Mammary epithelial cell (primary cell): ENCODE measurements at regions of chr4 and their contacts with region 1.

Region 1: DNA sequence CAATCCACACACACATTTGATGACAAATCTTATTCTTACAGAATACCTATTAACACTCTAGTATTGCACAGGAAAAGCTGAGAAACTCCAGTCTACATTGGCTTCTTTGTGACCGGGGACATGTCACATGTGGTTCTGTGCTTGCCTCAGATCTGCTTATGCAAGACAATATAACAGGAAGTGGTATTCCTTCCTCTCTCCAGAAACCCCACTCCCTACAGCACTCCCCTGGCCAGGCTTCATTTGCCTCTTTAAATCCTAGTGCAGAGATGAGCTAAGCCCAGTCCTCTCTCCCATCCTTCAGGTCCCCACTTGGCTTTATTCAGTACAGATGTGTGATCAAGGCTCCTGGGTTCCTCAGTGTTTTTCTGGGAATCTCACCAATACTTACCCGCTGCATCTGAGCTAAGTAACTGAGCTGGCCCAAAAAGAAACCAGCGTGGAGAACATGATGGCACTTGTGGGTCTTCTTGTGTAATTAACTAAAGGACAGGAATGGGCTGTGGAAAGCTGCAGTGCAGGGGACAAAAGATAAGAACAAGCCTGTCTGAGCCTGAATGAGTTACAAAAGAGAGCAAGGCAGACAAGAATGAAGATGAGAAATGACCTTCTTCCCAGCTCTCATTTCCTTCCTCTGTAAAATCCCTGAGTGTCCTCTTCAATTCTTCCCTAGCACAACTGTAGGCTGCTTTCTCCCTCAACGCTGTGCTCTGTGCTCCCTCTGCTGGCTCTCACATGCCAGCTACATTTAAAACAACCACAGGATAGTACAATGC is 105.6 kb downstream of the HNRNPD start:
- DNase-seq: peak; percentile 70
- H3K4me3 ChIP-seq: no peak overlapping the region
- H3K27ac ChIP-seq: peak overlapping the region; percentile 32
- H3K4me1 ChIP-seq: peaks cover 11% of the 10 kb centered on the region
- H3K27me3 ChIP-seq: no peaks in the 10 kb centered on the region
- CTCF ChIP-seq: peak; percentile 94 to 99

Region 2: GRCh38 chr4:81844717-81845116 is 423.5 kb before region 1 on chr4:
- CTCF ChIA-PET with region 1: no interaction called
- dilution Hi-C with region 1: no loop called
- in situ Hi-C with region 1: no loop called
- intact Hi-C with region 1: loop called (anchors 1 kb)
- DNase-seq: peak; percentile 76
- H3K4me3 ChIP-seq: no peak overlapping the region
- H3K27ac ChIP-seq: no peak overlapping the region
- H3K4me1 ChIP-seq: no peaks in the 10 kb centered on the region
- H3K27me3 ChIP-seq: no peaks in the 10 kb centered on the region
- CTCF ChIP-seq: peak; percentile 61 to 75

Region 3: DNA sequence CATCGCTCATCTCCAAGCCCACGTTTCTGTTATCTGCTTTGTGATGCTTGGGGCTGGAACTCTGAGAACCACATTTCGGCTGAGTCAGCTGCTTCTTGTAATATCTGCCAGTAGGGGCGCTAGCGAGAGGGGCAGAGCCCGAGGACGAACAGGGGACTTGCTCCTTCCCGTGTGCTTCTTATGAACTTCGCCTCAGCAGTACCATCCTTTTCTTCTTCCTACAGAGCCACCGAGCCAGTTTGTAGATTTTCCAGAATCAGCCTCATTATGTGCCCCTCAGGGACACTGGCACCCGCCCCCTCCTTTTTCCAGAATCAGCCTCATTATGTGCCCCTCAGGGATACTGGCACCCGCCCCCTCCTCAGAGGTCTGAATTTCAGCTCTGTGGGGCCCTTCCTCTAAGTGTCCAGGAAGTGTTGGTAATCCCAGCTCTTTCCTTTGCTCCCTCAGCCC is 354.8 kb before region 1 on chr4:
- CTCF ChIA-PET with region 1: no interaction called
- dilution Hi-C with region 1: no loop called
- in situ Hi-C with region 1: no loop called
- intact Hi-C with region 1: no loop called
- DNase-seq: peak; percentile 46
- H3K4me3 ChIP-seq: no peak overlapping the region
- H3K27ac ChIP-seq: no peak overlapping the region
- H3K4me1 ChIP-seq: no peaks in the 10 kb centered on the region
- H3K27me3 ChIP-seq: no peaks in the 10 kb centered on the region
- CTCF ChIP-seq: peak; percentile 74 to 80

Region 4: GRCh38 chr4:82044142-82044993 is 223.9 kb before region 1 on chr4:
- CTCF ChIA-PET with region 1: no interaction called
- dilution Hi-C with region 1: no loop called
- in situ Hi-C with region 1: no loop called
- intact Hi-C with region 1: loop called (anchors 2 kb)
- DNase-seq: peak; percentile 77
- H3K4me3 ChIP-seq: peak overlapping the region; percentile 62 to 72 (median 65)
- H3K27ac ChIP-seq: no peak overlapping the region
- H3K4me1 ChIP-seq: peaks cover 39% of the 10 kb centered on the region
- H3K27me3 ChIP-seq: no peaks in the 10 kb centered on the region
- CTCF ChIP-seq: no peak

Region 5: GRCh38 chr4:82140440-82140839 is 127.8 kb before region 1 on chr4:
- CTCF ChIA-PET with region 1: no interaction called
- dilution Hi-C with region 1: no loop called
- in situ Hi-C with region 1: no loop called
- intact Hi-C with region 1: loop called (anchors 10 kb)
- DNase-seq: no peak
- H3K4me3 ChIP-seq: no peak overlapping the region
- H3K27ac ChIP-seq: no peak overlapping the region
- H3K4me1 ChIP-seq: no peaks in the 10 kb centered on the region
- H3K27me3 ChIP-seq: peaks cover 5% of the 10 kb centered on the region
- CTCF ChIP-seq: no peak

Region 6: DNA sequence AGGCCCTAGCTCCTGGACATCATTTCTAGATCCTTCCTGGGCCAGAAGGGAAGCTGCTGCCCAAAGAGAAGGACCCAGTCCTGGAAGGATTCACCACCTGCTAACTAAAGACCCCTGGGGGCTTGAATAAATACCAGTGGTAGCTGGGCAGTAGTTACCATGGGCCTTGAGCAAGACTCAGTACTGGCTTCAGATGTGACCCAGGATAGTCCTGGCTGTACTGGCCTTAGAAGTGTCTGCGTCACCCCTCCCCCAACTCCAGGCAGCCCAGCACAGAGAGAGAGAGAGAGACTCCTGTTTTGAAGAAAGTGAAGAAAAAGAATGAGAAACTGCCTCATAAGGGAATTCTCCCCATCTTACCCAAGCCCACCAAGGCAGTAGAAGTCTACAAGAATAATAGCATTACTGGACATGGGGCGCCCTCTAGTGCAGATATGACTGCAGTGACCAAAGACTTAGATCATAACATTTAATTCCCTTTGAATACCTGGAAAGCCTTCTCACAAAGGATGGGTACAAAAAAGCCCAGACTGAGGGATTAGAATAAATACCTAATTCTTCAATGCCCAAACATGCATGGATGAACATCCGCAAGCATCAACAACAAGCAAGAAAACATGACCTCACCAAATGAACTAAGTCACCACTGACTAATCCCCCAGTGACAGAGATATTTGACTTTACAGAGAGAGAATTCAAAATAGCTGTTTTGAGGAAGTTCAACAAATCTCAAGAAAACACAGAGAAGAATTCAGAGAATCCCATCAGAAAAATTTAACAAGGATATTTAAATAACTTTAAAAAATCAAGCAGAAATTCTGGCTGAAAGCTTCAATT is 66.2 kb before region 1 on chr4:
- CTCF ChIA-PET with region 1: interaction called, 3 read pairs
- dilution Hi-C with region 1: no loop called
- in situ Hi-C with region 1: no loop called
- intact Hi-C with region 1: loop called (anchors 1 kb)
- DNase-seq: peak; percentile 29
- H3K4me3 ChIP-seq: no peak overlapping the region
- H3K27ac ChIP-seq: no peak overlapping the region
- H3K4me1 ChIP-seq: peaks cover 11% of the 10 kb centered on the region
- H3K27me3 ChIP-seq: no peaks in the 10 kb centered on the region
- CTCF ChIP-seq: peak; percentile 70 to 81

Region 7: DNA sequence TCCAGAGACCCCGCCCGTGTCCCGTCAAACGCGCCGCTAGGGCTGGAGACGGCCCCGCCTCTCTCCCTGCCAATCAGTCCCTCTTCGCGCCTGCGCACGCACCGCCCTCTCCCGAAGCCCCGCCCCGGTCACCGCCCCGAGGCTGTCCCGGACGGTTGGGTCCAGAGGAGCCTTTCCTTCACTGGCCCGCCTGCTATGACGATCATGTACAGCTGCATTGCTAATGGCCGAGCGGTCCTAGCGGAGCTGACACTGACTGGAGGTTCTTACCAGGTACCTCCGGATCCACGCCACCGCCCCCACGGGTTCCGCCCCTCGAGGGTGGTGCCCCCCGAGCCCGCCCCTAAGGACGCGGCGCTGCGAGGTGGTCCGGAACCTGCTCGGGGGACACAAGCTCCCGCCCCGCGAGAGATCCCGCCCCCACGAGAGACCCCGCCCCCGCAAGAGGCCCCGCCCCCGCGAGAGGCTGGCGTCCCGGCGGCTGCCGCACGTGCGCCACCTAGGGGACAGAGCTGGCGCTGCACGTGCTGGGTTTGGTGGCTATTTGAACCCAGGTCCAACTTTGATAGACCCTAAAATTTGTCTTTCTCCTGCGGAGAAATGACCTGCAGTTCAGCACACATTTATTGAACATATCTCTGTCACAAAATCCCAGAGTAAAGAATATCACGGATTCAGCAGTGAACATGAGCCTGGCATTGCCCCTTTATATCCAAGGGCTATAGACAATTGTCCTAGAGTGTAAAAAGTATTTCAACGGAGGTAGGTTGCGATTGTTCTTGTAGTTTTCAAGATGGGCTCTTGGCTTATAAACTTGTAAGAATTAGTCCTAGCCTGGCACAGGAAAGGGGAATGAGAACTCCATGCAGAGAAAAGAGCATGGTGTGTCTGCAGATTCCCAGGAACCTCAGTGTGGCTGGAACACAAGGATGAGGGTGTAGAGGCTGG is 16.9 kb after region 1 on chr4:
- CTCF ChIA-PET with region 1: interaction called, 20 read pairs
- dilution Hi-C with region 1: no loop called
- in situ Hi-C with region 1: no loop called
- intact Hi-C with region 1: no loop called
- DNase-seq: peak; percentile 100
- H3K4me3 ChIP-seq: peak overlapping the region; percentile 47 to 65 (median 60)
- H3K27ac ChIP-seq: no peak overlapping the region
- H3K4me1 ChIP-seq: no peaks in the 10 kb centered on the region
- H3K27me3 ChIP-seq: peaks cover 6% of the 10 kb centered on the region
- CTCF ChIP-seq: peak; percentile 58 to 94